Head of caudate nucleus (tissue), 42 donors: ENCODE measurements at regions of chr11 and their contacts with region 1.

Region 1: GRCh38 chr11:2532704-2533586 is 88.1 kb downstream of the KCNQ1 start:
- DNase-seq: peak; percentile 88 to 97 (median 93)

Region 2: GRCh38 chr11:2305140-2305840 is 227.7 kb before region 1 on chr11:
- intact Hi-C with region 1: loop called (anchors 10 kb)
- DNase-seq: peak; percentile 83 to 96 (median 90)

Region 3: GRCh38 chr11:2428322-2428795 is 104.6 kb before region 1 on chr11:
- intact Hi-C with region 1: loop called (anchors 2 kb)
- DNase-seq: peak; percentile 32 to 88 (median 71)

Region 4: GRCh38 chr11:2885676-2886081 is 352.7 kb after region 1 on chr11 and contains the start of gene CDKN1C:
- intact Hi-C with region 1: loop called (anchors 1 kb)
- DNase-seq: peak; percentile 81 to 96 (median 92)